ENCODE measurements at regions of chr10 and their contacts with region 1.

Region 1: DNA sequence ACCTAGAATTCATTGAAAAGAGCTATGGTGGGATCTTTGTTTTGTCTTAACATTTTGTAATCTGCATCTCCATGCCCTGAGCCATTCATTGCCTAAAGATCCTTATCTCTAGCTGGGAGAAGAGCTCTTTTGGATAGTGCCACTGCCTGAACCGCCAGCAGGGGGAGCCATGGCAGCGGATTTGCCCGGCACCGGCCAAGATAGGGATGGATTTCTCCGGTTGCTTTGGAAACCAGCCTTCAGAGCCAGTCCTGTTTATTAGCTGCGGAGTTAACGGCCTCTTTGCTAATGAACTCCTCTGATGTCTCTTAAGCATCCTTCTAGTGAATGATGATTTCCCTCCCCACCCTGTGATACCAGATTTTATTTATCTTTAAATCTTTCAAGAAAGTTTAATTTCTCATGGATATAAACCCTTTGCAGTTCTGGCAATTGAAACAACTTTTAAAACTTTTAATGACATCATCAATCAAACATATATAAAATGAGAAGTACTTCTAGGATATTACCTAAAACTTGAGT is 58.2 kb upstream of the LYZL2 start:
- DNase-seq: peak; percentile 55 to 90 (median 78)
- ATAC-seq: peak; percentile 79
- H3K4me3 ChIP-seq: no peak overlapping the region
- H3K4me3 Mint-ChIP-seq: no peak overlapping the region
- H3K27ac ChIP-seq: no peak overlapping the region
- H3K27ac Mint-ChIP-seq: no peak overlapping the region
- H3K4me1 ChIP-seq: no peaks in the 10 kb centered on the region
- H3K4me1 Mint-ChIP-seq: no peaks in the 10 kb centered on the region
- H3K27me3 ChIP-seq: peaks cover 4 to 21% of the 10 kb centered on the region in 2 experiments
- H3K27me3 Mint-ChIP-seq: peaks cover 44% of the 10 kb centered on the region
- CTCF ChIP-seq: peak; percentile 99

Region 2: DNA sequence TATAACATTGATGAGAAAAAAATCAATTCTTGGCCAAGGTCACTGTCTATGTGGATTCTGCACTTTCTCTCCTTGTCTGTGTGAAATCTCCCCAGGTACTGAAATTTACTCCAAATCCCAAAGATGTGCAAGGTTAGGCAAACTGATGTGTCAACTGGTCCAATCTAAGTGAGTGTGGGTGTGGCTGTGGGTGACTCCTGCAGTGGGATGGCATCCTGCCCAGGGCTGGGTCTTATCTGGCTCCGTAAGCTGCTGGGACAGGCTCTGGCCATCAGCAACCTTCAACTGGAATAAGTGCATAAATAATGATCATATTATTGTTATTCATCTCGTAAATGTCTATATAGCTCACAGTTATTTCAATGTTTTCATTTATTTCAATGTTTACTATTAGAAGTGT is 707.7 kb before region 1 on chr10:
- CTCF ChIA-PET with region 1: no interaction called
- POLR2A ChIA-PET with region 1: no interaction called
- intact Hi-C with region 1: no loop called
- DNase-seq: no peak
- ATAC-seq: no peak
- H3K4me3 ChIP-seq: no peak overlapping the region
- H3K4me3 Mint-ChIP-seq: no peak overlapping the region
- H3K27ac ChIP-seq: no peak overlapping the region
- H3K27ac Mint-ChIP-seq: no peak overlapping the region
- H3K4me1 ChIP-seq: no peaks in the 10 kb centered on the region
- H3K4me1 Mint-ChIP-seq: no peaks in the 10 kb centered on the region
- H3K27me3 ChIP-seq: no peaks in the 10 kb centered on the region
- H3K27me3 Mint-ChIP-seq: peaks cover 18% of the 10 kb centered on the region
- CTCF ChIP-seq: no peak

Region 3: DNA sequence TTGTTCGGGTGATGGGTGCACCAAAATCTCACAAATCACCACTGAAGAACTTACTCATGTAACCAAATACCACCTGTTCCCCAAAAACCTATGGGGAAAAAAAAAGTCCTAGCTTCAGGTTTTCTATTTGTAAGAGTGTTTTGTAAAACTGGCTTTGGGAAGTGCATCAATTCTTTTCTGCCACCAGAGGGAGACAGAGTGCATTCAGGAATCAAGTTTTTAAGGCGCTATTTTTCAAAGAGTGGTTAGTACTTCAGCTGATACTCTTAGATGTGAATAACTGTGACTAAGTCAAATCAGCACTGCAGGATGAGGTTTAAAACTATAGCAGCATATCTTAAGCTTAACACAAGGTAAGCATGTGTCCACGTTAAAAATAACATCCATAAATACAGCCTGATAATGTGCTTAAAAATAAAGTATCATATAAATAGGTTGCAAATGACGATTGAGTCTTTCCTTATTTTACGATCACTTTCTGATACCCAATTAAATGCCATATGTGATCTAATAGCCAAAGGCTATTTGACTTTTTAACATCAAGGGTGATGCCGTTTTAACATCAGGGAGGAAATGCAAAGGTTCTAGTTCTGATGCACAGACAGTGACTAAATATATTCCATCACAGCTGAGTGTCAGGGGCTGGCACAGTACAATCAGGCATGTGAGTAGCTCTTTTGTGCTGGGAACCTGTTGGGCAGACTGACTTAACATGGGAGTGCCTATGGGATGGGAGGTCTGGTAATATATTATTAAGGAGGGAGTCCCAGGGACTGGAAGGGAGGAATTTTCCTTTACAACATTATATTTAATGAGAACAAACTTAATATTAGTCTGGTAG is 47.6 kb before region 1 on chr10:
- CTCF ChIA-PET with region 1: interaction called, 11 read pairs
- POLR2A ChIA-PET with region 1: no interaction called
- intact Hi-C with region 1: no loop called
- DNase-seq: peak in 4 of 14 experiments; percentile 21 to 75 (median 53)
- ATAC-seq: peak; percentile 69
- H3K4me3 ChIP-seq: no peak overlapping the region
- H3K4me3 Mint-ChIP-seq: no peak overlapping the region
- H3K27ac ChIP-seq: no peak overlapping the region
- H3K27ac Mint-ChIP-seq: no peak overlapping the region
- H3K4me1 ChIP-seq: no peaks in the 10 kb centered on the region
- H3K4me1 Mint-ChIP-seq: no peaks in the 10 kb centered on the region
- H3K27me3 ChIP-seq: peaks cover 2 to 9% of the 10 kb centered on the region in 2 experiments
- H3K27me3 Mint-ChIP-seq: peaks cover 52% of the 10 kb centered on the region
- CTCF ChIP-seq: peak; percentile 91

Region 4: GRCh38 chr10:30671026-30671616 is 16.6 kb before region 1 on chr10:
- CTCF ChIA-PET with region 1: interaction called, 11 read pairs
- POLR2A ChIA-PET with region 1: no interaction called
- intact Hi-C with region 1: no loop called
- DNase-seq: peak in 4 of 14 experiments; percentile 49 to 79 (median 69)
- ATAC-seq: peak; percentile 75
- H3K4me3 ChIP-seq: peak overlapping the region; percentile 31
- H3K4me3 Mint-ChIP-seq: peak overlapping the region; percentile 65
- H3K27ac ChIP-seq: no peak overlapping the region
- H3K27ac Mint-ChIP-seq: no peak overlapping the region
- H3K4me1 ChIP-seq: no peaks in the 10 kb centered on the region
- H3K4me1 Mint-ChIP-seq: peaks cover 5% of the 10 kb centered on the region
- H3K27me3 ChIP-seq: peaks cover 0 to 13% of the 10 kb centered on the region in 2 experiments
- H3K27me3 Mint-ChIP-seq: peaks cover 22% of the 10 kb centered on the region
- CTCF ChIP-seq: peak; percentile 90

Region 5: DNA sequence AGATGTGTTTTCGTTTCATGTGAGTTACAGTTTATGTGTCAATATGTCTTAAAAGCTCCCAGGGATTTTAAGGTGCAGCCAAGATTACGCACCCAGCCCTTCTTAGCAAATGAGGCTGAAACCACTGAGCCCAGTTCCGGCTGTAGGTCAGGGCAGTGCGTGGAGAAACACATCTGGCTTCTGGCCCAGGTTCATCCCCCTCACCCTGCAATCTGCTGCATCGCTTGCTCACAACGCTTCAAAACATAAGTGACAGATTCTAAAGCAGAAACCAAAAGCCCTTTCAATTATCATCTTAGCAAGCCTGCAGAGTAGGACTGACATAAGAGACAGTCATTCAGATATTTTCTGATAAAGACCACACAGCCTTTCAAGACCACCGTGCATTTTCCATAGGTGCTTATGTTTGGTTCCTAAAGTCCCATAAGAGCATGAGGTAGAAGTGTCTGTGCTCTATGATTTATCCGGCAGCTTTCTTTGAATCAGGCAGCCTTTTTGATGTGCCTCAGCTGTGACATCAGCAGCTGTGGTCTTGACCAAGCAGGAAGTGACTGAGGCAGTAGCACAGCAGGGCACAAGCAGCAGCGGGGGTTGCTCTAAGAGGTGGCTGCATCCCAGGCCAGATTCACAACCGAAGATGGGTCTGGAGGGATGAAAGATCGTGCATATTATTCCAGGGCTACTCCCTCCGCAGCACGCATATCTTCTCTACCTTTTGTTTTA is 13.9 kb after region 1 on chr10:
- CTCF ChIA-PET with region 1: interaction called, 10 read pairs
- POLR2A ChIA-PET with region 1: interaction called, 8 read pairs
- intact Hi-C with region 1: no loop called
- DNase-seq: peak; percentile 41 to 87 (median 62)
- ATAC-seq: peak; percentile 65
- H3K4me3 ChIP-seq: peak overlapping the region; percentile 43
- H3K4me3 Mint-ChIP-seq: peak overlapping the region; percentile 85
- H3K27ac ChIP-seq: peak overlapping the region; percentile 51 to 74
- H3K27ac Mint-ChIP-seq: peak overlapping the region; percentile 99
- H3K4me1 ChIP-seq: peaks cover 81% of the 10 kb centered on the region
- H3K4me1 Mint-ChIP-seq: peaks cover 87% of the 10 kb centered on the region
- H3K27me3 ChIP-seq: no peaks in the 10 kb centered on the region
- H3K27me3 Mint-ChIP-seq: no peaks in the 10 kb centered on the region
- CTCF ChIP-seq: no peak